PC-3 (cell line): ENCODE measurements at regions of chr19 and their contacts with region 1.

Region 1: DNA sequence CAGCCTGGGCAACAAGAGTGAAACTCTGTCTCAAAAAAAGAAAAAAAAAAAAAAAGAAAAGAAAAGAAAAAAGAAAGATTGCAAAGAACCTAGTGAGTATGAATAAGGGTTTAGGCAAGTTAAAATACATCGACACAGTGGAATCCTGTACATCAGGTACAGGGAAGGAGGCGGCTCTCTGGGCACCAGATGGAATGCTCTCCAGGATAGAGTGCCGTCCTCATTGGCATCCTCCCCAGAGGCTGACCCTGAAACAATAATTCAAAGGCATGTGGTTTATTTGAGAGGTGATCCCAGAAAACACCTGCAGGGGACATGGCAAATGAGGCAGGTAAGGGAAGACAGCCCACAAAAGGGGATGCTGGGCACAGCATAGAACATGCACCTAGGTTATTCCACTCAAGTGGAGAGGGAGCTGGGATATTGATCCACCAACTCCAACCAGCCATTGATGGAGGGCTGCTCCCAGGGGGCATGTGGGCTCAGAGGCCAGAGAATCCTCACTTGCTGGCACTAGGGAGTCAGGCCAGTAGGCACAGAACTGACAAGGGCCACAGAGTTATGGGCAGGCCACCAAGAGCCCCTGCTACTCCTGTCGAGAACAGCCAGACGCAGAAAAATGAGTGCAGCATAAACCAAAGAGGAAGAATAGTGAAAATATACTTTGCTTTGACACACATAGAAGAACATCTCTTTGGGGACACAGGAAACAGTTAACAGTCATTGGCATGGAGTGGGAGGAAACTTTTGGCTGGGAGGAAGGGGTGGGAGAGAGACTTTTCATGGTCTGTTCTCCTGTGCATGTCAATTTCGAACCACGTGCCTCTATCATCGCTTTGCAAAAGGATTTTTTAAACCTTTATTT is 4.2 kb downstream of the TSPAN16 start:
- DNase-seq: no peak
- ATAC-seq: no peak
- H3K4me3 ChIP-seq: no peak overlapping the region
- H3K27ac ChIP-seq: no peak overlapping the region
- H3K4me1 ChIP-seq: no peaks in the 10 kb centered on the region
- H3K27me3 ChIP-seq: no peaks in the 10 kb centered on the region
- CTCF ChIP-seq: no peak

Region 2: DNA sequence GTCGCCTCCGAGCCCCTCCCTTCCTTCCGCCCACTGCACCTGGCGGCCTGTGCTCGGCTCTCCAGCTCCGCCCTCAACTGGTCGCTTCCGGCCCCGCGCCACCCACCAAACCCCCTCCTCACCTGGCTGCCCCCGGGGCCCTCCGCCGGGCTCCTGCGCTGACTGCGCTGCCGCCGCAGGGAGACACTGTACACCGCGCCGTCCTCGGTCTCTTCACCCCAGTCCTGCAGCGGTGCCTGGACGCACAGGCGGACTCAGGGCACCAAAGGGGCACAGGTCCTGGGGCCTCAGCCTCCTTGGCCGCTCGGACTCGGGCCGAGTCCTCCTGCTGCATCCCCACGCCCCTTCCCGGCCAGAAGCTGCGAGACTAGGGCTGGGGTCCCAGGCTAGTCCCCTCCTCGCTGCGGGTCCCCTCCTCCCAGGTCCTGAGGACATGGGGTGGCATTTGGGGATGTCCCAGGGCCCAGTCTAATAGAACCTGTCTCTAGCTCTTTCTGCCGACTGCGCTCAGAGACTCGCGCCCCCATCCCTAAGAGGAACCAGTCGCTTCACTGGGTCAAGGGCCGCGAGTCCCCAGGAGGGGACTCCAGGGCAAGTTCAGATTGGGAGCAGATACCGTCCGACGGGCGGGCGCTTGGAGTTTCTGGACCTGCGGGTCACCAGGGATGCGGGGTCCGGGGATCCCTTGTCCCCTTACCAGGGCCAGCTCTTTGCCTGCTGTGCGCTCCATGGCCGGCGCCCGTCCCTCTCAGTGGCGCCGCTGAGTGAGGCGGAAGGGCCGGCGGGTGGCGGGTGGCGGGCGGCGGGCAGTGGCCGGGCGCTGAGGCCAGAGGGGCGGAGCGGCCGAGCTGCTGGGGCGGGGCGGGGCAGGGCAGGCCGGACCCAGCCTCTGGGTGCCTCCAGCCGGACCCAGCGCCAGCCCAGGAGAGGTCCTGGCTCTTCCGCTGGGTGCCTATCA is 118.7 kb after region 1 on chr19 and contains the start of gene RGL3:
- CTCF ChIA-PET with region 1: interaction called, 11 read pairs
- POLR2A ChIA-PET with region 1: no interaction called
- intact Hi-C with region 1: no loop called
- DNase-seq: peak; percentile 33
- ATAC-seq: peak; percentile 79
- H3K4me3 ChIP-seq: peak within 1 kb of the TSS; percentile 72
- H3K27ac ChIP-seq: no peak within 1 kb of the TSS
- H3K4me1 ChIP-seq: no peaks in the 10 kb centered on the region
- H3K27me3 ChIP-seq: no peaks in the 10 kb centered on the region
- CTCF ChIP-seq: no peak
- total RNA-seq, gene RGL3: 23.5 and 24.2 TPM in 2 replicates